Transverse colon (tissue), 4 donors: ENCODE measurements at regions of chr3 and their contacts with region 1.

Region 1: DNA sequence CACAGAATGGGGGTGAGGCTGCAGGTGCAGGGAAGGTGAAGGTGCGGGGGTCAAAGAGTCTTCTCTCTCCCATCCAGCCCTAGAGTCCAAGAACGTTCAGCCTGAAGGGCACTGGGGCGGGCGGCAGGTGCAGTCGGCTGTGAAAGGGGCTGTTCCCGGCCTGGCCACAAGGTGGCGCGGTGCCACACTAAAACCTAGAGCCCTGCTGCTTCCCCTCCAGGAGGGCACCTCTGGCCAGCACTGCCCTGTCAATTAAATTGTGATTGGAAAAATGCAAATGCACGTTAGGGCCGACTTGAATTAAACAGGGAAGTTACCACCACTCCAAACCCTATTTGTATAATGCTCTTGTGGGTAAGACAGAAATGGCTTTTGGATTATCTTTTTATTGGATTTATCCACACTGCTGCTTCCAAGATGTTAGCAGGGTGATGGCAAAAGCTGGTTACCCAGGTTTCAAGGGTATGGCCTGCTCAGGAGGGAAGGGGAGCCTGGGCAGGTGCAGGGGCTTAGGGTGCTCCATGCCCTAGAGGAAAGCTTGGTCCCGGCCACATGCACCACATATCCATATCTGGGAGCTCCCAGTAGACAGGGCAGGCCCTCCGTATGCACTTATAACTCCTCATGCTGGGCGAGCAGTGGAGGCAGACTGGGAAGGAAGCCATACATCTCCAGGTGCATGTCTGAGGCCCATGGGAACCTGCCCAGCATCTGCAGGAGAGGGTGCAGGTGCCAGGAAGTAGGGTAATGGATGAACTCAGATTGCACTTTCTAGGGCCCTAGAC is 119.8 kb downstream of the ADCY5 start:
- DNase-seq: peak; percentile 81
- H3K4me3 ChIP-seq: no peak overlapping the region
- H3K27ac ChIP-seq: peak overlapping the region in 3 of 4 donors; percentile 42 to 80 (median 69)
- H3K4me1 ChIP-seq: peaks cover 0 to 15% (median 6%) of the 10 kb centered on the region in 4 donors
- H3K27me3 ChIP-seq: no peaks in the 10 kb centered on the region
- CTCF ChIP-seq: peak; percentile 92 to 99 (median 95)
- EP300 ChIP-seq: no peak
- POLR2A ChIP-seq: no peak

Region 2: GRCh38 chr3:123449102-123449996 is 120.3 kb after region 1 on chr3:
- in situ Hi-C with region 1: no loop called
- intact Hi-C with region 1: loop called (anchors 5 kb)
- DNase-seq: peak; percentile 26
- H3K4me3 ChIP-seq: peak overlapping the region; percentile 59 to 82 (median 68)
- H3K27ac ChIP-seq: peak overlapping the region; percentile 83 to 90 (median 88)
- H3K4me1 ChIP-seq: peaks cover 0 to 25% (median 18%) of the 10 kb centered on the region in 4 donors
- H3K27me3 ChIP-seq: peaks cover 62% of the 10 kb centered on the region
- CTCF ChIP-seq: no peak
- EP300 ChIP-seq: no peak
- POLR2A ChIP-seq: no peak

Region 3: GRCh38 chr3:123489400-123490004 is 160.5 kb after region 1 on chr3:
- in situ Hi-C with region 1: loop called (anchors 5 to 25 kb)
- intact Hi-C with region 1: loop called (anchors 2 kb)
- DNase-seq: peak; percentile 68
- H3K4me3 ChIP-seq: no peak overlapping the region
- H3K27ac ChIP-seq: peak overlapping the region in 2 of 4 donors; percentile 33 to 40
- H3K4me1 ChIP-seq: peaks cover 0 to 6% (median 0%) of the 10 kb centered on the region in 4 donors
- H3K27me3 ChIP-seq: no peaks in the 10 kb centered on the region
- CTCF ChIP-seq: peak; percentile 85 to 92 (median 87)
- EP300 ChIP-seq: no peak
- POLR2A ChIP-seq: no peak

Region 4: GRCh38 chr3:123559040-123559861 is 230.2 kb after region 1 on chr3:
- in situ Hi-C with region 1: loop called in 3 of 4 experiments (anchors 10 kb)
- intact Hi-C with region 1: loop called (anchors 5 kb)
- DNase-seq: no peak
- H3K4me3 ChIP-seq: no peak overlapping the region
- H3K27ac ChIP-seq: no peak overlapping the region
- H3K4me1 ChIP-seq: peaks cover 0 to 3% (median 0%) of the 10 kb centered on the region in 4 donors
- H3K27me3 ChIP-seq: no peaks in the 10 kb centered on the region
- CTCF ChIP-seq: peak; percentile 57 to 85 (median 74)
- EP300 ChIP-seq: no peak
- POLR2A ChIP-seq: no peak

Region 5: DNA sequence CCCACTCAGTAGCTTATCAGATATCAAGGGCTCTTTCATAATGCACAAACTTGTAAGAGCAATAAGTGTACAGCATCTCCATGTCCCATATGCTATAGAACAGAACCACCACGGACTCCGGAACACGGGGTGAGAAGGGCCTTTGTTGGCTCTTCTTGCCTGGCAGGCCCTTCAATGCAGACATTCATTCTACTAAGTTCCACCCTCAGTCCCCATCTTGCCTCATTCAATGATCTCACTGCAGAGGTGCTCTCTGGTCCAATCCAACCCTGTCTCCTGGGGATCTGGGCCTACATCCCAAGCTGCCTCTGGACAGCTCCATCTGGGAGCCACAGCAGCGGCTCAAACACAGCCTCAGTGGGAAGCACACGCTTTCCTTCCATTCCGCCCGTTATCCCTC is 239.0 kb after region 1 on chr3:
- in situ Hi-C with region 1: loop called in 1 of 4 experiments (anchors 10 kb)
- intact Hi-C with region 1: no loop called
- DNase-seq: no peak
- H3K4me3 ChIP-seq: no peak overlapping the region
- H3K27ac ChIP-seq: no peak overlapping the region
- H3K4me1 ChIP-seq: no peaks in the 10 kb centered on the region
- H3K27me3 ChIP-seq: no peaks in the 10 kb centered on the region
- CTCF ChIP-seq: no peak
- EP300 ChIP-seq: no peak
- POLR2A ChIP-seq: no peak